GM10248 (cell line): ENCODE measurements at regions of chr3 and their contacts with region 1.

Region 1: DNA sequence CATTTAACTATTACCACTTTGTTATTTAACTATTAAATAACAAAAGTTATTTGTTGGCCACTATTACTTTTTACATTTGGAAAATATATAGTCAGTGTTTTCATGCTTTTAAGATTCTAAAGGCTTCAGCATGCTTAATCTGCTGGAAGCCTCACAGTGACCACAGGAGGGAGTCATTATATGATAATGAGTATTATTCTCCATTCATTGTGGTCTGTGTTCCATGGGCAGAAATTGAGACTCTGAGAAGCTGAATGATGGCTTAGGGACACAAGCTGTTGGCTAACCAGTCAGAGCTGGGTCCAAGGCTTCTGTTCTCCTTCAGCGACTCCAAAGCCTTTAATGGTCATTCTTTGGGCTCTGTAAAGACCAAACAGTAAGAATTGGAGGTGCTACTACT is 64.7 kb downstream of the BFSP2 start:
- DNase-seq: no peak
- CTCF ChIP-seq: peak; percentile 44

Region 2: GRCh38 chr3:133448478-133449122 is 16.0 kb before region 1 on chr3:
- CTCF ChIA-PET with region 1: interaction called, 240 read pairs
- POLR2A ChIA-PET with region 1: interaction called, 4 read pairs
- DNase-seq: peak; percentile 80
- CTCF ChIP-seq: no peak

Region 3: DNA sequence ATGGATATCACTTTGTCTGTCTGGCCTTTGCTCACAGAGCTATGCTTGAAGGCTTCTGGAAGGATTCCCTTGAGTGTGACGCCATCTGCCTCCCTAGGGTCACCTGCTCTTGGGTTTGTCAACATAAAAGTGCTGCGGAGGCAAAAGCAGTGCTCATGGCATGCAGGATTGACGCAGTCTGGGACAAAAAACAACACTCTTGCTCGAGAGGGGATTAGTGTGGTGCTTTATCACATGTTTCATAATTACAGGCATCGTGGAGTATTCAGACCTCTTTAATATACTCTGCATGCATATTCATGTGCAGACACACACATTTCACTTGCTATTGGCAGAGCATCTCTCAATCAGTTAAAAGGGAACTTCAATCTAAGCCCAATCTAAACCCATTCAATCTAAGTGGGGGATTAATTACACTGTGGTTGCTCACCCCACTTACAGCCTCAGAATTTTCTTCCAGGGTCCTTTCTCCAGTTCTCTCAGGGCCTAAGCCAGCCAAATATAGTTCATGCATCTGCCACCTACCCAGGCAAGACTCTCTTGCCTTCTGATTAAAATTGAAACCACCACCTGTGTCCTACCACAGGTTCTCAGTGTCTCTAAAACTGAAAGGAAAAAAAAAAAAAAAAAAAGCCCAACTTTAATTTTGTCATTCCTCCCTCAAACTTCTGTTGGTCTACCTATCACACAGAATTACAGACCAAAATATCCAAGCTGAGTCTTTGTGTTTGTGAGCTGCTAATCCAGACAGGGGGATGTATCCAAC is 10.9 kb after region 1 on chr3:
- CTCF ChIA-PET with region 1: interaction called, 240 read pairs
- POLR2A ChIA-PET with region 1: no interaction called
- DNase-seq: peak; percentile 80
- CTCF ChIP-seq: peak; percentile 2